ENCODE measurements at regions of chr14 and their contacts with region 1.

Region 1: GRCh38 chr14:68843471-68844209 is 50.8 kb upstream of the ZFP36L1 start:
- DNase-seq: peak; percentile 61 to 72 (median 66)
- H3K4me3 ChIP-seq: no peak overlapping the region
- H3K4me3 Mint-ChIP-seq: peak overlapping the region in 4 of 8 donors; percentile 39 to 75 (median 55)
- H3K27ac ChIP-seq: no peak overlapping the region
- H3K27ac Mint-ChIP-seq: peak overlapping the region in 4 of 7 donors; percentile 11 to 72 (median 59)
- H3K4me1 ChIP-seq: peaks cover 28% of the 10 kb centered on the region
- H3K4me1 Mint-ChIP-seq: peaks cover 18 to 37% (median 26%) of the 10 kb centered on the region in 4 donors
- H3K27me3 ChIP-seq: no peaks in the 10 kb centered on the region
- H3K27me3 Mint-ChIP-seq: peaks cover 1 to 2% of the 10 kb centered on the region in 2 donors

Region 2: DNA sequence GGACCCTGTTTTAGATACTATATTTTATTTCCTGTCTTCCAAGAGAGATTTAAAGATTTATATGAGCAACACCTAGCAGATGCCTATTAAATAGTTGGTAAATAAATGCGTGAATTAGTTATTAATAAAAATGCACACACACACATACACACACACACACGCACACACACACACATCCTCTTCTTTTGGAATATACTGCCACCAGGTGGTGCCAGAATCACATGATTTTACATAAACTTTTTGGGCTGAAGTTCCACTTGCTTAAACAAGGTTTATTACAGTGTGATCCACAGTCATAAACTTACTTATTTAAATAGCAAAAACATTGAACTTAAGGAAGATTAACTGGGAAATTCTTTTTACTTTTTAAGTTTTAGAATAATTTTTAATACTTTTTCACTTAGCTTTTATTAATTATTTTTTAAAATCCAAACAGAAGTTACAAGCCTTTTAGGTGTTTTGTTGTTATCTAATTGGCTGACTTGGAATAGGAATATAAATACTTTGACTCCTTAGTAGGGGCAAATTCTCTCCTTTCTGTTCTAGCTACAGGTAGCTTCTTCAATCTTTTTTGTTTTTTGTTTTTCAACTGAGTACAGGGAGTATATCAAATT is 1006.5 kb before region 1 on chr14:
- CTCF ChIA-PET with region 1: interaction called, 19 read pairs
- POLR2A ChIA-PET with region 1: no interaction called
- intact Hi-C with region 1: loop called (anchors 1 kb)
- DNase-seq: peak; percentile 65 to 74 (median 71)
- H3K4me3 ChIP-seq: no peak overlapping the region
- H3K4me3 Mint-ChIP-seq: no peak overlapping the region
- H3K27ac ChIP-seq: no peak overlapping the region
- H3K27ac Mint-ChIP-seq: peak overlapping the region in 4 of 7 donors; percentile 23 to 64 (median 41)
- H3K4me1 ChIP-seq: no peaks in the 10 kb centered on the region
- H3K4me1 Mint-ChIP-seq: peaks cover 0 to 8% (median 0%) of the 10 kb centered on the region in 4 donors
- H3K27me3 ChIP-seq: no peaks in the 10 kb centered on the region
- H3K27me3 Mint-ChIP-seq: no peaks in the 10 kb centered on the region

Region 3: DNA sequence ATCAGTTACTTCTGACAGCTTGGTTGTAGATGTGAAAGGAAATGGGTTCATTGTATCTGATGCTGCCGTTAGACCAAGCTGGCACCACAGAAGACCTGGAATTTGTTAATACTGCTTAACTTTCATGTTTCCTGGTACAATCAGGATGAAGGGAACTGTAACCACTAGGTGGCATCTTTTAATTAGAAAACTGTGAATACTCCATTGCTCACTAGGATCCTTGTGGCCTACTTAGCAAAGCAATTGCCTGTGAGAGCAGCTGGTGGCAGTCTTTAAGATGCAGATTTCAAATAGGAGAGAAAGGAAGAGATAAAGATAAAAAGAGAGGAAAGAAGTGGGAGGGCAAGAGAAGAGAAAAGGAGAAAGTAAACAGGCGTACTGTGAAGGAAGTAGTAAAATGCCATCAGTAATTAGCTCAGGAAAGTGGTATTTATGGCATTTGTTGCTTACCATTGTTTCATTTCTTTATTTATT is 909.6 kb before region 1 on chr14:
- CTCF ChIA-PET with region 1: interaction called, 50 read pairs
- POLR2A ChIA-PET with region 1: no interaction called
- intact Hi-C with region 1: loop called (anchors 1 kb)
- DNase-seq: peak in 4 of 5 donors; percentile 37 to 51 (median 46)
- H3K4me3 ChIP-seq: no peak overlapping the region
- H3K4me3 Mint-ChIP-seq: no peak overlapping the region
- H3K27ac ChIP-seq: no peak overlapping the region
- H3K27ac Mint-ChIP-seq: peak overlapping the region in 5 of 7 donors; percentile 9 to 94 (median 77)
- H3K4me1 ChIP-seq: peaks cover 7% of the 10 kb centered on the region
- H3K4me1 Mint-ChIP-seq: peaks cover 5 to 6% (median 5%) of the 10 kb centered on the region in 4 donors
- H3K27me3 ChIP-seq: no peaks in the 10 kb centered on the region
- H3K27me3 Mint-ChIP-seq: no peaks in the 10 kb centered on the region

Region 4: DNA sequence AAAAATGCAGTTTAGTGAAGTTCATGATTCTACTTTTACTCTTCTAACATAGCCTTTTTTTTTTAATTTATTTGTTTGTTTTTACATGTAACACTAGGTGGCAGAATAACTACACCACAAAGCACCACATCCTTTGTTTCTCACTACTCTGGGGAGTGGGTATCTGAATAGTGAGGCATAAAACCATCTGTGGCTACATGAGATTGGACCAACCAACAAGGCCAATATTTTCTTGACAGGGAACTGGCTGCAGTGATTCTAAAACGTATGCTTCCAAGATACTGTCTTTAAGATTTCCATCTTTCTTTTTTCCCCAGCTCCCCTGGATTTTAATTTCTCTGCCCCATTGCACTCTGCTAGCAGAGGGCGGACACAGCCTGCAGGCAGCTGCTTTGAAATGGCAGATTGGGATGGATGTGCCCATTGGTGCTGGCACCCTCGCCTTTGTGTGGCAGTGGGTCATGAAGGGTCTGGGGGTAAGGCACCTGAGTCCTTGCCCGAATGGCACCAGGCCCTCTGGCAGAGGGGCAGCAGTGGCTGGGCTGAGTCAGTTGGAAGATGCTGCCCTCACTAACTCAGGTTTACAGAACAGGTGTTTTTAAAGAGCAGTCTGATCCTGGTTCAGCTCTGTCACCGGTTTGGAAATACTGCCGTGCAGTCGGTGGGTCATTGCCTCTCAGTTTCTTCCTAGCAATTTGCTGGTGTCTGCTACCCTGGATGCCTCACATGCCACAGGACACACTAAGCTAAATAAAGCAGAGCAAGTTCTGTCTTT is 595.0 kb before region 1 on chr14:
- CTCF ChIA-PET with region 1: interaction called, 43 read pairs
- POLR2A ChIA-PET with region 1: interaction called, 4 read pairs
- intact Hi-C with region 1: loop called (anchors 1 kb)
- DNase-seq: peak; percentile 43 to 65 (median 62)
- H3K4me3 ChIP-seq: no peak overlapping the region
- H3K4me3 Mint-ChIP-seq: no peak overlapping the region
- H3K27ac ChIP-seq: no peak overlapping the region
- H3K27ac Mint-ChIP-seq: peak overlapping the region in 3 of 7 donors; percentile 55 to 61 (median 61)
- H3K4me1 ChIP-seq: peaks cover 24% of the 10 kb centered on the region
- H3K4me1 Mint-ChIP-seq: peaks cover 12 to 38% (median 24%) of the 10 kb centered on the region in 4 donors
- H3K27me3 ChIP-seq: no peaks in the 10 kb centered on the region
- H3K27me3 Mint-ChIP-seq: no peaks in the 10 kb centered on the region

Region 5: DNA sequence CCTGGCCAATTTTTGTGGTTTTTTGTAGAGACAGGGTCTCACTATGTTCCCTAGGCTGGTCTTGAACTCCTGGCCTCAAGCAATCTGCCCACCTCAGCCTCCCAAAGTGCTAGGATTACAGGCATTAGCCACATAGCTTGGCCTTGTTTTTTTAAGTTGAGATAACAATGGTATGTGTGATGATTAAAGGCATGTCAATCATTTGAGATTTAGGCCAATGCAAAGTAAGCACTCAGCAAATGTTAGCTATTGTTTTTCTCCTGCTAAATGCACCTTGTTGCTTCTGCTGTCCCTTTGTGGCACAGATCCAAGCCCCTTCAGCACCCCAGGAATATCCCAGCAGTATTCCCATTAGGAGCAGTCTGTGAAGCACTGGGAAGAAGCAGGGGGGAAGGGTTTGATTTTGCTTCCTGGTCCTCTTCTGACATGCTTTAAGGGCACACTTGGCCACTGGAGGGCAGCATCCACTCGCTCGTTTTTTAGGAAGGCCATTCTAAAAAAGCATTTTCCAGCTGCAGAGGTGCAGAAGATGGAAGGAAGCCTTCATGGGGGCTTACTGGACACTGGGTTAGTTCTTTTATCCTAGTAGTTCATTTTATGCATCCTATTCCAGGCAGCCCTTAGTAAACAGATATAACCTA is 19.4 kb after region 1 on chr14:
- CTCF ChIA-PET with region 1: interaction called, 12 read pairs
- POLR2A ChIA-PET with region 1: no interaction called
- intact Hi-C with region 1: no loop called
- DNase-seq: peak; percentile 43 to 59 (median 53)
- H3K4me3 ChIP-seq: no peak overlapping the region
- H3K4me3 Mint-ChIP-seq: no peak overlapping the region
- H3K27ac ChIP-seq: no peak overlapping the region
- H3K27ac Mint-ChIP-seq: peak overlapping the region in 1 of 7 donors; percentile 35
- H3K4me1 ChIP-seq: no peaks in the 10 kb centered on the region
- H3K4me1 Mint-ChIP-seq: no peaks in the 10 kb centered on the region
- H3K27me3 ChIP-seq: no peaks in the 10 kb centered on the region
- H3K27me3 Mint-ChIP-seq: no peaks in the 10 kb centered on the region

Measured in CD4-positive, alpha-beta memory T cell (primary cell).